ENCODE measurements at regions of chr12 and their contacts with region 1.

Region 1: DNA sequence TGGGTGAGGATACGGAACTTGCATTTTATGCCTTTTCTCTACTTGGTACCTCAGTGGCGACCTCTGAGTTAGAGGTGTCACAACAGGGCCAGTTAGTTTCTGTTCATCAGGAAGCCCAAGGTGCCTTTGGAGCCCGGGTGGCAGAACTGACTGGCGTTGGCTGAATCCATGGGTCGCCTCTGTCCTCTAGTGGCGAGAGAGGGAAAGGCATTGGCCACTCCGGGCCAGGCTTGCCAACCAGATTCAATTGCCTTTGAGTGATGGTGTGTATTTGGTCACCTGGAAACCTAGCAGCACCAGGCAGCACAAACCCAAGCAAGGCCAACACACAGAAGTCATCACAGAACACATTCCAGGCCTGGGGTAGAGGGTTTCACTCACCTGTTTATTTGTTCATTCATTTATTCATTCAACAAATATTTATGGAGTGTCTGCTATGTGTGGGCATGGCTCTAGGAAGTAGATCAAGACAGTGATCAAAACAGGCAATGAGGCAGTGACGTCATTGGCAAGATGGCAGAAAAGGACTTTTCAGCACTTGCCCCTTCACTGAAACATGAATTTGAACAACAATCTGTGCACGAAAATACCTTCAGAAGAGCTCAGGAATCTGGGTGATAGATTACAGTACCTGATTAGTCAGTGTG is 40.5 kb upstream of the KCNA5 start:
- DNase-seq: peak; percentile 30 to 41 (median 40)
- ATAC-seq: peak; percentile 70
- H3K4me3 ChIP-seq: no peak overlapping the region
- H3K27ac ChIP-seq: no peak overlapping the region
- H3K4me1 ChIP-seq: no peaks in the 10 kb centered on the region
- H3K27me3 ChIP-seq: no peaks in the 10 kb centered on the region
- CTCF ChIP-seq: peak; percentile 68 to 76 (median 76)
- EP300 ChIP-seq: no peak
- POLR2A ChIP-seq: no peak
- RAD21 ChIP-seq: peak; percentile 58 to 79

Region 2: GRCh38 chr12:4874671-4875070 is 128.5 kb before region 1 on chr12:
- CTCF ChIA-PET with region 1: no interaction called
- POLR2A ChIA-PET with region 1: no interaction called
- in situ Hi-C with region 1: loop called (anchors 10 kb)
- intact Hi-C with region 1: no loop called
- DNase-seq: peak in 2 of 4 experiments; percentile 5 to 11
- ATAC-seq: no peak
- H3K4me3 ChIP-seq: no peak overlapping the region
- H3K27ac ChIP-seq: no peak overlapping the region
- H3K4me1 ChIP-seq: no peaks in the 10 kb centered on the region; a peak in 1 of 5 replicates
- H3K27me3 ChIP-seq: no peaks in the 10 kb centered on the region
- CTCF ChIP-seq: no peak
- EP300 ChIP-seq: no peak
- POLR2A ChIP-seq: no peak
- RAD21 ChIP-seq: no peak